ENCODE measurements at regions of chr14 and their contacts with region 1.

Region 1: DNA sequence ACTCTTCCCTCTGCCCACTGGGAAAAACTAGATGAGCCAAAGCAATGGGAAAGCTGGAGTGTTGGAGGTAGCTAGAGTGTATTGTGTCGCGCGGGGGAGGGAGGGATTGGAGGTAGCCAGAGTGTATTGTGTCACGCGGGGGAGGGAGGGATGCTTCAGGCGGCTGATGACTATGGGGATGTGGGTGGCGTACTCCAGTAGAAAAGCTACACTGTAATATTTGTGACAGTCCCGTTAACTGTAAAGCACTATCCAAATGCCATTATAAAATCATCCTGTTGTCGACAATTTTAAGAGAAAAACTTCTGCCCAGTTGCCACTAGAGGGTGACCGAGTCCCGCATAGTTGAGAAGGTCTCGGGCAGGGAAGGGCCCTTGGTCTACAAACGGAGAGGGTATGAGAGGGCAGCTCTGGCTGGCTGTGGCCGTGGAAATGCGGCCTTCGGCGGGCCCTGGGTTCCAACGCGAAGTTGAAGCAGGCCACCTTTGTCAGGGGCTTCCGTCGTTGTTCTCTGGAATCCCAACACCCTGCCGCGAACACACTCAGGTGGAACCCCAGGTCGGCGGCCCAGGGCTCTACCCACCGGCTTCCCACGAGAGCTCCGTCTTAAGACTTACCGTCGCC is 15.1 kb upstream of the PLEK2 start:
- DNase-seq: peak; percentile 88
- H3K4me3 ChIP-seq: no peak overlapping the region
- H3K27ac ChIP-seq: no peak overlapping the region
- H3K4me1 ChIP-seq: peaks cover 0 to 9% (median 6%) of the 10 kb centered on the region in 6 donors
- H3K27me3 ChIP-seq: peaks cover 0 to 38% (median 2%) of the 10 kb centered on the region in 7 donors
- CTCF ChIP-seq: peak; percentile 35 to 83 (median 73)
- POLR2A ChIP-seq: no peak

Region 2: DNA sequence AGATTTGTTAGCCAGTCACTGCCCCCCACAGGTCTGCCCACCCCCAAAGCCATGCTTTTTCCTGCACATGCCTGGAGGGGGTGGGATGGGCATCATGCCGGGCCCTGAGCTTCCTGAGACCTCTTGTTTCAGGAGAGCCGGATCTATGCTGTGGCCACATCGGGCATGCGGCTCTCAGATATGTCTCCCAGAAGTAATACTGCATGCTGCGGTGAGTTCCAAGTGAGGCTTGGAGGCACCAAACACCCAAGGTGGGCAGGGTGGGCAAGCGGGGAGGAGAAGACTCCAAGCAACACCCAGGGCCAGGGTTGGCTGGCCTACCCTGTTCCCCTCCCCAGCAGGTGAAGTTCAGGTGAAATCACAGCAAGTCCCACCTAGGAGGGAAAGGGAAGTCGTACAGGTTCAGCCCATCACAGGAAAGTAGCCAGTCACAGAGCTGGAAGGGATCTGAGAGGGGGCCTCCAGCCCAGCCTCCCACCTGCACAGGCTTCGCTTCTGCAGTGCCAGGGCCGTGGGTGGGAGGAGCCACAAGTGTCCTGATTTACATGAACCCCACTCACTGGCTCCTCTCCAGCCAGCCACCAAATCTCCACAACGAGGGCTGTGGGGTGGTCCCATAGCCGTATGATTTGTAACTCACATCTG is 142.0 kb after region 1 on chr14:
- intact Hi-C with region 1: loop called (anchors 1 kb)
- DNase-seq: peak; percentile 71
- H3K4me3 ChIP-seq: no peak overlapping the region
- H3K27ac ChIP-seq: no peak overlapping the region
- H3K4me1 ChIP-seq: peaks cover 0 to 4% (median 0%) of the 10 kb centered on the region in 6 donors
- H3K27me3 ChIP-seq: no peaks in the 10 kb centered on the region
- CTCF ChIP-seq: no peak
- POLR2A ChIP-seq: no peak

Region 3: DNA sequence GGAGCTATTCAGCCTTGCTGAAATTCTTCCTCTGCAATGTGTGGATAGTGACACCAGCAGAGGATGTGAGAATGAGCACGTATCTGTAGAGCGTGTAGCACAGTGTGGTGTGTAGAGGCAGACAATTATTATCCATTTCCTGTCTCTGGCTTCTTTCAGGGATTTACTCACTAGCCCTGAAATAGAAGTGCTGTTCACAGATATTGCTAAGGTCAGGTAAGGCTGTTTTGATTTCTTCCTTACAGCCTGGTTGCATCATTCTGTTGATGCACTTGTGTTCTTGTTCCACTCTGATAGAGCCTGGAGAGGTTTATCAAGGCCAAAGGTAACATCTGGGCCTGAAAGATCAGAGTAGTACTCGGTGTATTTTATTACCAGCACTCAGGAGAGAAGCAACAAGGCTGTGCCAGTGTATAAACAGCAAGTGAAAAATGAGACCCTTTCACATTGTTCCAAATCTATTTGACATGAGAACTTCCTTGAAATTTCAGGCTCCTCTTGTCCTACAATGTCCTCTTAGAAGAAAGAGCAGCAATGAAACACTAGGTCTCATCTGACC is 209.3 kb after region 1 on chr14:
- intact Hi-C with region 1: no loop called
- DNase-seq: no peak
- H3K4me3 ChIP-seq: no peak overlapping the region
- H3K27ac ChIP-seq: no peak overlapping the region
- H3K4me1 ChIP-seq: no peaks in the 10 kb centered on the region
- H3K27me3 ChIP-seq: no peaks in the 10 kb centered on the region
- CTCF ChIP-seq: no peak
- POLR2A ChIP-seq: no peak

Measured in spleen (tissue), 13 donors.